ENCODE measurements at regions of chr9 and their contacts with region 1.

Region 1: GRCh38 chr9:94166237-94166963 is 82.1 kb downstream of the PTPDC1 start:
- DNase-seq: peak; percentile 88
- ATAC-seq: peak; percentile 63
- H3K4me3 ChIP-seq: peak overlapping the region; percentile 89
- H3K27ac ChIP-seq: peak overlapping the region; percentile 99
- H3K4me1 ChIP-seq: peaks cover 10% of the 10 kb centered on the region
- H3K27me3 ChIP-seq: no peaks in the 10 kb centered on the region
- CTCF ChIP-seq: peak in 2 of 3 experiments; percentile 2 to 24; a peak in 3 of 6 replicates
- EP300 ChIP-seq: peak in 1 of 2 experiments; percentile 47; a peak in 1 of 4 replicates
- POLR2A ChIP-seq: peak; percentile 84
- RAD21 ChIP-seq: no peak

Region 2: DNA sequence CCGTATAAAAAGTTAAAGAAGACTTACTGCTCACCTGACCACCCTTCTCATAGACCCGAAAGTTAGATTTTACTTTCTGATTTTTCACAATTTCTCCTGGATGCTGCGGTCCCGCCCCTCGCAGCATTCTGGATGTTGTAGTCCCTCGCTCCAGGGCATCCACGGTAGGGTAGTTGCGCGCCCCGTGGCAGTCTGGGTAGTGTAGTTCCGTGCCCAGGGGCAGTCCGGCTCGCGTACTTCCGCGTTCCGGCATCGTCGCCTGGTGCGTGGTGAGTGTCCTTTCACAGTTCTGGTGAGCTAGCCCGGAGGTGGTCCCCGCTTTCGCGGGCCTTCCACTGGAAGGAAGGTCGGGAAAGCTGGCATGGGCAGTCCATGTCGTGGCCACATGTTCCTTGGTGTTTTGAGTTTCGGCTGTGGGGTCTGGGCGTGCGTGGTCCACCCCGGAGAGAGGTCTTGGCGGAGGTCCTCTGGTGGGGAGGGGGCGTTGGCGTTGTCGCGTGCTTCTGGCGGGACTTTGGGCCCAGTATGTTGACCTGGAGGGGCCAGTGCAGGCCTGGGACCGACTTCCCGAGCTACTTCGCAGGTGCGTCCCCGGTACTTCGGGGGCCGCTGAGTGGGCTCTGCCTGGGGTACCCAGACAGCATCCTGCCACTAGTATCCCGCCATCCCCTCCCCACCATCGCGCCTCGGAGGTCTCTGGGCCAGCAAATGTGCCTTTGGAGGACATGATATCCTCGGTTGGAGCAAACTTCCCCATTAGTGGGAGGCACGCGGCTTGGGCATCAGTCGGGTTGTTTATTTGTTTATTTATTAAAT is 92.9 kb after region 1 on chr9 and contains the start of gene ZNF169:
- CTCF ChIA-PET with region 1: no interaction called
- POLR2A ChIA-PET with region 1: no interaction called
- RAD21 ChIA-PET with region 1: no interaction called
- SMC1A ChIA-PET with region 1: no interaction called
- in situ Hi-C with region 1: no loop called
- intact Hi-C with region 1: loop called (anchors 5 kb)
- DNase-seq: peak; percentile 53
- ATAC-seq: peak; percentile 100
- H3K4me3 ChIP-seq: peak within 1 kb of the TSS; percentile 88
- H3K27ac ChIP-seq: peak within 1 kb of the TSS; percentile 83
- H3K4me1 ChIP-seq: peaks cover 4% of the 10 kb centered on the region; the same call in 1 of the 2 replicates
- H3K27me3 ChIP-seq: no peaks in the 10 kb centered on the region
- CTCF ChIP-seq: no peak
- EP300 ChIP-seq: no peak
- POLR2A ChIP-seq: peak; percentile 90
- RAD21 ChIP-seq: no peak
- polyA plus RNA-seq, gene ZNF169: 2.2 TPM